Activated T-helper 1 cell treated with anti-CD3 and anti-CD28 coated beads, Interleukin-12 subunit alpha, Interleukin-12 subunit beta, Interleukin-2, Interleukin-4 antibody, amounts not matched to agents 30 ng/mL and 10 ng/mL and 1 ng/mL, durations not matched to agents 14 hours and 24 hours and 36 hours (primary cell): ENCODE measurements at regions of chr6 and their contacts with region 1.

Region 1: DNA sequence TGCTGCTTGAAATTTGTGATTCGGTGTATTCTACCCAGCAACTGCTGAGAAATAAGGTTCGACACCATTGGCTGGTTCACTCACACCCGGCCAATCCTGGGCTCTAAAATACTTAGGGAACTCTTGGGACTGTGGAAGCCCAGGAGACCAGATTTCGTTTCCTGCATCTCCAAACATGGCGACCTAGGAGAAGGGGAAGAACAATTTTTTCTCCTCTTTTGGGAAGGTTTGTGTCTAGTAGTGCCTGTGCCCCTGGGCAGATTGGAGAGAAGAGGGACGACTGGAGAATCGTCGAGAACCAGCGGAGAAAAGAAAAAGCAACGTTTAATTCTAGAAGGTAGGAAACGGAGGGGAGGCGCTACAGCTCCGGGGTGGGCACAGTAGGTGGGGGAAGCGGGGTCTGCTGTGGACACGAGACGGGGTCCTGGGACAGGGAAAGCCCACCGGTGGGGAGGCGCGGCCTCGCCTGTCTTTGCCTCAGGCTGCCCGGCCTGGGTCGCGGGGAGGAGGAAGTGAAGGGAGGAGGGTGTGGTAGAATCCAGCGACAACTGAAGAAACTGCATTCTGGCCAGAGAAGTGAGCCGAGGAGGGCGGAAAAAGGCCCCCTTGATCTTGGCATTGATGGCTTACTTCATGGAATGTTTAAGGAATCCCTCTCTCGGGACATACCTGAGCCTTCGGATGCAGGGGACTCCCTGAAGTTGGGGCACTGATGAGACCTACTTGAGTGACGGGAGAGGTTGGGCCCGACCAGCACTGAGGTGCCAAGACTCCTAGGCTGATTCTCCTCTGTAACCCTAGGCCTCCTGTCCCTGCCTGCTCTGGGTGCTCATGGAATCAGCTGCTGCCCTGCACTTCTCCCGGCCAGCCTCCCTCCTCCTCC is at the start of gene BTN2A1:
- DNase-seq: peak; percentile 68
- H3K4me3 Mint-ChIP-seq: peak within 1 kb of the TSS; percentile 100
- H3K27ac Mint-ChIP-seq: peak within 1 kb of the TSS; percentile 96
- H3K4me1 Mint-ChIP-seq: peaks cover 57% of the 10 kb centered on the region
- H3K27me3 Mint-ChIP-seq: no peaks in the 10 kb centered on the region
- total RNA-seq, gene BTN2A1: 19.9 TPM in 2 replicates

Region 2: GRCh38 chr6:26383624-26384417 is 74.2 kb before region 1 on chr6:
- intact Hi-C with region 1: loop called (anchors 1 kb)
- DNase-seq: no peak
- H3K4me3 Mint-ChIP-seq: peak overlapping the region; percentile 95
- H3K27ac Mint-ChIP-seq: peak overlapping the region; percentile 90
- H3K4me1 Mint-ChIP-seq: peaks cover 57% of the 10 kb centered on the region
- H3K27me3 Mint-ChIP-seq: no peaks in the 10 kb centered on the region

Region 3: DNA sequence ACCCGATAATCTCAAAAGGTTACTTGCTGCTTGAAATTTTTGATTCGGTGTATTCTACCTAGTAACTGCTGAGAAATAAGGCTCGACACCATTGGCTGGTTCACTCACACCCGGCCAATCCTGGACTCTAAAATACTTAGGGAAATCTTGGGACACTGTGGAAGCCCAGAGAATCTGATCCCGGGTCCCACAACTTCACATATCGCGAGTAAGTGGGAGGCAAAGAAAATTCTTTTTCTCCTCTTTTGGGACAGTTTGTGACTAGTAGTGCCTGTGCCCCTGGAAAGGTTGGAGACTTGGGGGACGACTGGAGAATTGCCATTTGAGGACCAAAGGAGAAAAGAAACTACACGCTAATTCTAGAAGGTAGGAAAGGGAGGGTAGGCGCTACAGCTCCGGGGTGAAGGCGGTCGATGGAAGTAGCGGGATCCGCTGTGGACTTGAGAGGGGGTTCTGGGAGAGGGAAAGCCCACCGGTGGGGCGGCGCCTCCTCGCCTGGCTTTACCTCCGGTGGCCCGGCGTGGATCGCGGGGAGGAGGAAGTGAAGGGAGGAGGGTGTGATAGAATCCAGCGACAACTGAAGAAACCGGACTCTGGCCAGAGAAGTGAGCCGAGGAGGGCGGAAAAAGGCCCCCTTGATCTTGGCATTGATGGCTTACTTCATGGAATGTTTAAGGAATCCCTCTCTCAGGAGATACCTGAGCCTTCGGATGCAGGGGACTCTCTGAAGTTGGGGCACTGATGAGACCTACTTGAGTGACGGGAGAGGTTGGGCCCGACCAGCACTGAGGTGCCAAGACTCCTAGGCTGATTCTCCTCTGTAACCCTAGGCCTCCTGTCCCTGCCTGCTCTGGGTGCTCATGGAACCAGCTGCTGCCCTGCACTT is 36.5 kb before region 1 on chr6:
- intact Hi-C with region 1: loop called (anchors 2 kb)
- DNase-seq: peak; percentile 37
- H3K4me3 Mint-ChIP-seq: no peak overlapping the region
- H3K27ac Mint-ChIP-seq: no peak overlapping the region
- H3K4me1 Mint-ChIP-seq: peaks cover 4% of the 10 kb centered on the region
- H3K27me3 Mint-ChIP-seq: no peaks in the 10 kb centered on the region

Region 4: GRCh38 chr6:26493258-26493657 is 35.2 kb after region 1 on chr6:
- intact Hi-C with region 1: loop called (anchors 2 kb)
- DNase-seq: no peak
- H3K4me3 Mint-ChIP-seq: peak overlapping the region; percentile 49
- H3K27ac Mint-ChIP-seq: no peak overlapping the region
- H3K4me1 Mint-ChIP-seq: peaks cover 45% of the 10 kb centered on the region
- H3K27me3 Mint-ChIP-seq: peaks cover 8% of the 10 kb centered on the region

Region 5: GRCh38 chr6:26532699-26533531 is 74.9 kb after region 1 on chr6:
- intact Hi-C with region 1: loop called (anchors 1 kb)
- DNase-seq: peak; percentile 86
- H3K4me3 Mint-ChIP-seq: peak overlapping the region; percentile 94
- H3K27ac Mint-ChIP-seq: peak overlapping the region; percentile 95
- H3K4me1 Mint-ChIP-seq: peaks cover 46% of the 10 kb centered on the region
- H3K27me3 Mint-ChIP-seq: peaks cover 3% of the 10 kb centered on the region

Region 6: GRCh38 chr6:26543953-26544352 is 85.9 kb after region 1 on chr6:
- intact Hi-C with region 1: no loop called
- DNase-seq: no peak
- H3K4me3 Mint-ChIP-seq: no peak overlapping the region
- H3K27ac Mint-ChIP-seq: no peak overlapping the region
- H3K4me1 Mint-ChIP-seq: peaks cover 52% of the 10 kb centered on the region
- H3K27me3 Mint-ChIP-seq: no peaks in the 10 kb centered on the region